ENCODE measurements at regions of chr3 and their contacts with region 1.

Region 1: GRCh38 chr3:147191795-147192385 is 214.5 kb downstream of the ZIC4 start:
- DNase-seq: no peak

Region 2: DNA sequence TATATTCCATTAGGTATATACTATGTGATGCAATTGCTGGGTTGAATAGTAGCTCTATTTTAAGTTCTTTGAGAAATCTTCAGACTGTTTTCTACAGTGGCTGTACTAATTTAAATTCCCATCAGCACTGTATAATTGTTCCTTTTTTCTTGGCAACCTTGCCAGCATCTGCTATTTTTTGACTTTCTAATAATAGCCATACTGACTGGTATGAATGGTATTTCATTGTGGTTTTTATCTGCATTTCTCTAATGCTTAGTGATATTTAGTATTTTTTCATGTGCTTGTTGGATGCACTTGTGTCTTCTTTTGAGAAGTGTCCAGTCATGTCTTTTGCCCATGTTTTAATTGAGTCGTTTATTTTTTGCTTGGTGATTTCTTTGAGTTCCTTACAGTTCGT is 441.7 kb before region 1 on chr3:
- intact Hi-C with region 1: loop called (anchors 5 kb)
- DNase-seq: no peak

Region 3: GRCh38 chr3:146817704-146818103 is 374.2 kb before region 1 on chr3:
- intact Hi-C with region 1: loop called (anchors 10 kb)
- DNase-seq: no peak

Region 4: GRCh38 chr3:147361454-147362420 is 169.8 kb after region 1 on chr3:
- intact Hi-C with region 1: no loop called
- DNase-seq: no peak